CD4-positive, alpha-beta T cell (primary cell): ENCODE measurements at regions of chr1 and their contacts with region 1.

Region 1: DNA sequence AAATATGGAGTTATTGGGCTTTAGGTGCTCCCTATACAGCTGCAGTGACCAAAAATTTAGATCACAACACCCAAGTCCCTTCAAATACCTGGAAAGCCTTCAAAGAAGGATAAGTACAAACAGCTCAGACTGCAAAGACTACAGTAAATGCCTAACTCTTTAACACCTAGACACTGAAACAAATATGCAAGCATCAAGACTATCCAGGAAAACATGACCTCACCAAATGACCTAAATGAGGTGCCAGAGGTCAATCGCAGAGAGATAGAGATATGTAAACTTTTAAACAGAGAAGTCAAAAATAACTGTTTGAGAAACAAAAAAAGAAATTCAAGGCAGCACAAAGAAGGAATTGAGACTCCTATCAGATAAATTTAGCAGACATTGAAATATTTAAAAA is 753.8 kb upstream of the B3GALT2 start:
- DNase-seq: no peak
- ATAC-seq: no peak
- H3K4me3 ChIP-seq: no peak overlapping the region
- H3K4me3 Mint-ChIP-seq: no peak overlapping the region
- H3K27ac ChIP-seq: no peak overlapping the region
- H3K27ac Mint-ChIP-seq: no peak overlapping the region
- H3K4me1 ChIP-seq: no peaks in the 10 kb centered on the region
- H3K4me1 Mint-ChIP-seq: no peaks in the 10 kb centered on the region
- H3K27me3 ChIP-seq: no peaks in the 10 kb centered on the region
- H3K27me3 Mint-ChIP-seq: no peaks in the 10 kb centered on the region
- CTCF ChIP-seq: no peak

Region 2: GRCh38 chr1:193919827-193920226 is 20.3 kb before region 1 on chr1:
- CTCF ChIA-PET with region 1: no interaction called
- POLR2A ChIA-PET with region 1: no interaction called
- intact Hi-C with region 1: loop called in 1 of 2 experiments (anchors 2 kb)
- DNase-seq: no peak
- ATAC-seq: no peak
- H3K4me3 ChIP-seq: no peak overlapping the region
- H3K4me3 Mint-ChIP-seq: no peak overlapping the region
- H3K27ac ChIP-seq: no peak overlapping the region
- H3K27ac Mint-ChIP-seq: no peak overlapping the region
- H3K4me1 ChIP-seq: no peaks in the 10 kb centered on the region
- H3K4me1 Mint-ChIP-seq: no peaks in the 10 kb centered on the region
- H3K27me3 ChIP-seq: no peaks in the 10 kb centered on the region
- H3K27me3 Mint-ChIP-seq: no peaks in the 10 kb centered on the region
- CTCF ChIP-seq: no peak

Region 3: DNA sequence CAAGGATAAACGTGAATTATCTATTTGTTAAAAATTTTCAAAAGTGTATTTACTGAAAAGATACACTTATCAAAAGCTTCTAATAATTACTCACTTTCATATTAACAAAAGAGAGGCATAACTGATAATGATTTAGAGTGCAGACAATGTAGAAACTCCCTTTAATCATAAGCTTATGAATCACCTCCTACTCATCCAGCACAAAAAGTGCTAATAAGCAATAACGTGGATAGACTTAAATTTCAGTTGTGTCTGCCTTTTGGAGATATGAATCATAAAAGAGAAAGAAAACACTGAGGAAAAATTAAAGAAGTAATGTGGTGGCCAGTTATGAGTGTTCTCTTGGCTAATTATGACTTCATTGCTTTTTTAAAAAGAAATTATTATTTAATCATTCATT is 73.8 kb after region 1 on chr1:
- CTCF ChIA-PET with region 1: no interaction called
- POLR2A ChIA-PET with region 1: no interaction called
- intact Hi-C with region 1: no loop called
- DNase-seq: no peak
- ATAC-seq: no peak
- H3K4me3 ChIP-seq: no peak overlapping the region
- H3K4me3 Mint-ChIP-seq: no peak overlapping the region
- H3K27ac ChIP-seq: no peak overlapping the region
- H3K27ac Mint-ChIP-seq: no peak overlapping the region
- H3K4me1 ChIP-seq: no peaks in the 10 kb centered on the region
- H3K4me1 Mint-ChIP-seq: no peaks in the 10 kb centered on the region
- H3K27me3 ChIP-seq: no peaks in the 10 kb centered on the region
- H3K27me3 Mint-ChIP-seq: no peaks in the 10 kb centered on the region
- CTCF ChIP-seq: no peak